ENCODE measurements at regions of chr17 and their contacts with region 1.

Region 1: DNA sequence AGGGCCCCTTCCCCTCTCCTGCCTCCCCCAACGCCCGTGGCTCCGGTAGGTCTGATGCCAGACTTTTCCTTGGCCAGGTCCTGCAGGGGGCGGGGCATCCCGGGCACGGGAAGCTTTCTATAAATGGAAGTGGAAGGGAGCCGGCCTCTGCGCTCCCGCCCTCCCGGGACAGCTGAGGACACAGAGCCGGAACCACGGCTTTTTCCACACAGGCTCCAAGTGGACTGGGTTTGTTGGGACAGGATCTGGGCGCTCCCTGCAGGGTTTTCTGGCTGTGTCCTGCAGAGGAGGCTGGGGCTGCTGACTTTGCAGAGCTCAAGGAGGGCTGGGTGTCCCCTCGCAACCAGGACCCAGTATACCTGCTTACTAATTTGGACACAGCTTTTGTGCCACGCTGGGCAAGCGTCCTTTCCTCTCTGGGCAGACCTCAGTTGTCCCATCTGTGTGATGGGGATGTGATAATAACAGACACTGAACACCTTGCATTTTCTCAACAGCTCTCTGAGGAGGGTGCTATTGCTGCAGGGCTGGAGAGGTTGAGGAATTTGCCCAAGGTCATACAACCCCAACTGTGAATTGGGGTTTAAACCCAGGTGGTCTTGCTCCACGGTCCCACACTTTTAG is 1.8 kb downstream of the TNS4 start:
- DNase-seq: peak; percentile 90
- H3K4me3 Mint-ChIP-seq: peak overlapping the region; percentile 98
- H3K27ac Mint-ChIP-seq: peak overlapping the region; percentile 97
- H3K4me1 Mint-ChIP-seq: peaks cover 39% of the 10 kb centered on the region
- H3K27me3 Mint-ChIP-seq: no peaks in the 10 kb centered on the region
- CTCF ChIP-seq: no peak

Region 2: DNA sequence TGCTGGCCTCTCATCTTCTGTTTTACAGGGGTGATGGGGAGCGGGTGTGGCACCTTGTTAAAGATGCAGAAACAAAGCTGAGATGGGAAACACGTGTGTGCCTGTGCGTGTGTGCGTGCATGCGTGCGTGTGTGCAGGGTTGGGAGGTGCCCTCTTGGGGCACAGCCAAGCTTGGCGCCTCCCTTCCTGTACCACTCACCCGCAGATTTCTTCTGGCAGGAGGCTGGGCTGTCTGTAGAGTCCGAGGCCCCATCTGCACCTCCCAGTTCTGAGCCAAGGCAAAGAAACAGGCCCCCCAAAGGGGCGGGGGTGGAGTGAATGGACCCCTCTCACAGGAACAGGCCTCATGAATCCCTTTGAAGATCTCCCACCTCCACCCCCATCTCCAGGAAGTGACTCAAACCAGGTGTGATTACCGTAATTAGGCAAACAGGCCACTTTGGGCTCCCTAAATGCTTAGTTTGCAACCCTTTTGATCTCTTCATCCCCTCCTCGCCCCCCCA is 19.1 kb before region 1 on chr17:
- CTCF ChIA-PET with region 1: interaction called, 5 read pairs
- POLR2A ChIA-PET with region 1: interaction called, 703 read pairs
- intact Hi-C with region 1: loop called (anchors 2 kb)
- DNase-seq: peak; percentile 73
- H3K4me3 Mint-ChIP-seq: no peak overlapping the region
- H3K27ac Mint-ChIP-seq: peak overlapping the region; percentile 89
- H3K4me1 Mint-ChIP-seq: peaks cover 68% of the 10 kb centered on the region
- H3K27me3 Mint-ChIP-seq: no peaks in the 10 kb centered on the region
- CTCF ChIP-seq: no peak

Region 3: DNA sequence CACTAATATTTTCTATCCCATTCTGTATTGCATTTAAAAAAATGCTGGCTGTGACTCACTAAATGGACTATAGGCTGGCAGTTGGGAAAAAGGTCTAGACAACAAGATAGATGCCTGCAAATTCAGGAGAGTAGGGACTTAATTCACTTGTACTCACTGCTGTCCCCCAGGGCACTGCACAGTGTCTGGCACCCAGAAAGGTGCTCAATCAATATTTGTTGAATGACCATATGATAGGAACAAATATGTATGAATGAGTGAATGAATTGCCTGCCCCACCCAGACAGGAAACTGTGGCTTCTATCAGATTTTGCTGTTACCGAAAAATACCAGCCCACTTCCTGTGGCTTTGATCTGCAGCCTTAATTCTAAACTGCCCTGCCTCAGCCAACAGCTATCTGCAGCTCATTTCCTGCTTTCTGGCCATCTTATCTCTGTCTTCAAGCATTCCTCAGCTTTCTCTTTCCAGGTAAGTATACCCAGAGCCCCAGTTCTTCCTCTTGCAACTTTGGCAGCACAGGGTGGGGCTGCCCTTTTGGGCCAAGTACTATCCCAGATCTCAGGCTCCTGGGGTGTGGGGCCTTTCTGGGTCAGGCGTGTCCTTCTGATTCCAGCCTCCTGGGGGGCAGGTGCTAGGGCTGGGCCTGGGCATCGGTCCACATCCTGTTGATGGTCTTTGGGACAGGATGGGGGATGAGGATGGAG is 17.1 kb after region 1 on chr17:
- CTCF ChIA-PET with region 1: interaction called, 8 read pairs
- POLR2A ChIA-PET with region 1: interaction called, 614 read pairs
- intact Hi-C with region 1: loop called (anchors 1 kb)
- DNase-seq: no peak
- H3K4me3 Mint-ChIP-seq: peak overlapping the region; percentile 58
- H3K27ac Mint-ChIP-seq: peak overlapping the region; percentile 87
- H3K4me1 Mint-ChIP-seq: peaks cover 63% of the 10 kb centered on the region
- H3K27me3 Mint-ChIP-seq: no peaks in the 10 kb centered on the region
- CTCF ChIP-seq: no peak

Region 4: GRCh38 chr17:40536295-40537171 is 36.9 kb after region 1 on chr17:
- CTCF ChIA-PET with region 1: interaction called, 22 read pairs
- POLR2A ChIA-PET with region 1: interaction called, 195 read pairs
- intact Hi-C with region 1: loop called (anchors 1 kb)
- DNase-seq: peak; percentile 94
- H3K4me3 Mint-ChIP-seq: peak overlapping the region; percentile 40
- H3K27ac Mint-ChIP-seq: no peak overlapping the region
- H3K4me1 Mint-ChIP-seq: peaks cover 38% of the 10 kb centered on the region
- H3K27me3 Mint-ChIP-seq: no peaks in the 10 kb centered on the region
- CTCF ChIP-seq: no peak

Region 5: DNA sequence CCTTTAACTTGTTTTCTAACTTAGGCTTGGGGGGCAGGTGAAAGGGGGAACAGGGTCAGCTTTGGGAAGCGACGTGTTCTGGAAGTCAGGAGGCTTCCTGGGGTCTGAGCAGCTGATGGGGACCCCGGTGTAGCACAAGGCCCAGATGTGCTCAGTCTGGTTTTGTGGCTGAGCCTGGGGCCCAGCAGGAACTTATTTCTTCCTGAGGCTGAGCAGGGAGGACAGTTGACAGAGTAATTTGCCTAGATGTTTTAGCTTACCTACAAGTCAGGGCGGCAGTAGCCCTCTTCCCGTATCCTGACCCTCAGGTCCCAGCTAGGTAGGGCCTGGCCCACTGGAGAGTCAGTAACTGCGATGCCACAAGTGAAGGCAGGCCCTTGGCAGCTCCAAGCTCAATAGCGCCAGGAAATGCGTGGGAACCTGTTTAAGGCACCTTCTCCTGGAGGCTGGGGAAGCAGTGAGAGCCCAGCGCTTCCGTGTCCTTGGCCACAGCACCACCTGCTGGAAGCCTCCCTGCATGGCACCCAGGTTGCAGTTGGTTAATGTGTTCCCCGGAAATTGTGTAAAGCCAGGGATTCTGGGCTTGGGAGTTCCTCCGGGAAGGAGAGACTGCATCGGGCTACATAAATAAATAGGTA is 60.4 kb after region 1 on chr17:
- CTCF ChIA-PET with region 1: interaction called, 18 read pairs
- POLR2A ChIA-PET with region 1: interaction called, 15 read pairs
- intact Hi-C with region 1: no loop called
- DNase-seq: peak; percentile 98
- H3K4me3 Mint-ChIP-seq: no peak overlapping the region
- H3K27ac Mint-ChIP-seq: peak overlapping the region; percentile 8
- H3K4me1 Mint-ChIP-seq: peaks cover 6% of the 10 kb centered on the region
- H3K27me3 Mint-ChIP-seq: peaks cover 41% of the 10 kb centered on the region
- CTCF ChIP-seq: peak; percentile 97

Region 6: DNA sequence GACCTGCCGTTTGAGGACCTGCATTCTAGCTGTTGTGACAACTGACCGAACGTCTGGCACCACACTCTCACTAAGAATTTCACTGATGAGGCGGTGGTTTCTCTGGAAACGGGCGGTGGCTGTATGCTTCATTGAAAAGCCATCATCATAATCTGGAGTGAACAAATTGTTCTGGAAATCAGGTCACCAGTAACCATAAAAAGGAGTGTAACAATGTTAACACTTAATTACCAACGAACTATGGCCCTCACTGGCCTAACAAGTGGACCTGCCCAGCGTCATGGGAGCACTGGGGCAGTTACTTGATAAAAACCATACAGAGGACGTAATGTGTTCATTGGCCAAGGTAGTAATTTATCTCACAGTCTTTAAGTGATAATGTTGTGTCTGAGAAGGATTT is 132.6 kb after region 1 on chr17:
- CTCF ChIA-PET with region 1: no interaction called
- POLR2A ChIA-PET with region 1: no interaction called
- intact Hi-C with region 1: no loop called
- DNase-seq: no peak
- H3K4me3 Mint-ChIP-seq: no peak overlapping the region
- H3K27ac Mint-ChIP-seq: no peak overlapping the region
- H3K4me1 Mint-ChIP-seq: no peaks in the 10 kb centered on the region
- H3K27me3 Mint-ChIP-seq: no peaks in the 10 kb centered on the region
- CTCF ChIP-seq: no peak